H1 (cell line): ENCODE measurements at regions of chr20 and their contacts with region 1.

Region 1: DNA sequence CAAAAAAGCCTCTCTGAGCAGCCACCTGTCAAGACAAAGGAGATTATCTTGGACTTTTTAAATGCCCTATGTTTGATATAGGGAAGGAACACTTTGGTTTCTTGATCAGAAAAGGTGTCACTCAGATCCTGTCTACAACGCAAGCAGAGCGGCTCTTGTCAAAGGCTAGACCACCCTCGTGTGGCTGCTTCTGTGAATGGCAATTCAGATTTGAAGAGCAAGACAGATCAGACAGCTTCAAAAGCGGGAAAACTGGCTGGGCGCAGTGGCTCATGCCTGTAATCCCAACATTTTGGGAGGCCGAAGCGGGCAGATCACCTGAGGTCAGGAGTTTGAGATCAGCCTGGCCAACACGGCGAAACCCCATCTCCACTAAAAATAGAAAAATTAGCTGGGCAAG is 10.1 kb upstream of the NXT1 start:
- DNase-seq: peak in 1 of 2 experiments; percentile 70
- H3K4me3 ChIP-seq: no peak overlapping the region
- H3K27ac ChIP-seq: no peak overlapping the region
- H3K4me1 ChIP-seq: peaks cover 0 to 5% (median 0%) of the 10 kb centered on the region in 4 experiments; a peak in 3 of 7 replicates
- H3K27me3 ChIP-seq: no peaks in the 10 kb centered on the region
- CTCF ChIP-seq: peak; percentile 51 to 87 (median 83)
- EP300 ChIP-seq: no peak
- POLR2A ChIP-seq: no peak
- RAD21 ChIP-seq: peak; percentile 94

Region 2: GRCh38 chr20:22684072-22684762 is 656.3 kb before region 1 on chr20:
- CTCF ChIA-PET with region 1: interaction called, 48 read pairs
- POLR2A ChIA-PET with region 1: no interaction called
- DNase-seq: peak; percentile 47 to 83
- H3K4me3 ChIP-seq: no peak overlapping the region
- H3K27ac ChIP-seq: no peak overlapping the region
- H3K4me1 ChIP-seq: no peaks in the 10 kb centered on the region
- H3K27me3 ChIP-seq: no peaks in the 10 kb centered on the region; a peak in 3 of 7 replicates
- CTCF ChIP-seq: peak; percentile 69 to 93 (median 91)
- EP300 ChIP-seq: no peak
- POLR2A ChIP-seq: no peak
- RAD21 ChIP-seq: peak; percentile 99

Region 3: GRCh38 chr20:23050847-23051631 is 289.5 kb before region 1 on chr20:
- CTCF ChIA-PET with region 1: interaction called, 30 read pairs
- POLR2A ChIA-PET with region 1: interaction called, 7 read pairs
- DNase-seq: peak; percentile 78 to 98
- H3K4me3 ChIP-seq: peak overlapping the region; percentile 47 to 71 (median 61)
- H3K27ac ChIP-seq: no peak overlapping the region
- H3K4me1 ChIP-seq: peaks cover 4 to 12% (median 6%) of the 10 kb centered on the region in 4 experiments; a peak in 6 of 7 replicates
- H3K27me3 ChIP-seq: peaks cover 31 to 61% (median 50%) of the 10 kb centered on the region in 4 experiments
- CTCF ChIP-seq: peak; percentile 68 to 90 (median 85)
- EP300 ChIP-seq: no peak
- POLR2A ChIP-seq: no peak
- RAD21 ChIP-seq: peak; percentile 81 to 86

Region 4: DNA sequence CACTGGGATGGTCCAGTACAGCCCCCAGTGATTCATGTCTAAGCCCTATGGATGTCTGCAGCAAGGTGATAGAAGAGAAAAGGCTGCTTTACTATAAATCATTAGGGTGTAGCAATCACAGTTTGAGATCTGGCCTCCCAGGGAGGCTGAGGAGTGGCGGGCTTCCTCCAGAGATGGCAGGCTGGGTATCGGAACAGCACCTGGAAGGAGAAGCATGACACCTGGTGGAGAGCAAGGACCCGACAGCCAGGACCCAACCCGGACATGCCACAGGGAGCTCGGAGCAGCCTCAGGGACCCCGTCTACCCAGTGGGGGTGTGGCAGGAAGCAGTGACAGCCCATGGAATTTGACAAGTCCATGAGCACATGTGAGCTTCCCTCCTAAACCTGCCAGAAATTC is 139.6 kb before region 1 on chr20:
- CTCF ChIA-PET with region 1: interaction called, 11 read pairs
- POLR2A ChIA-PET with region 1: no interaction called
- DNase-seq: peak; percentile 34 to 70
- H3K4me3 ChIP-seq: no peak overlapping the region
- H3K27ac ChIP-seq: no peak overlapping the region
- H3K4me1 ChIP-seq: peaks cover 9 to 14% (median 10%) of the 10 kb centered on the region in 4 experiments
- H3K27me3 ChIP-seq: peaks cover 0 to 2% (median 0%) of the 10 kb centered on the region in 4 experiments; a peak in 2 of 7 replicates
- CTCF ChIP-seq: peak; percentile 79 to 84 (median 84)
- EP300 ChIP-seq: peak in 1 of 2 experiments; percentile 28; a peak in 1 of 3 replicates
- POLR2A ChIP-seq: no peak
- RAD21 ChIP-seq: peak; percentile 90 to 93

Region 5: GRCh38 chr20:23245553-23246181 is 94.9 kb before region 1 on chr20:
- CTCF ChIA-PET with region 1: interaction called, 41 read pairs
- POLR2A ChIA-PET with region 1: no interaction called
- DNase-seq: peak in 1 of 2 experiments; percentile 66
- H3K4me3 ChIP-seq: no peak overlapping the region
- H3K27ac ChIP-seq: no peak overlapping the region
- H3K4me1 ChIP-seq: no peaks in the 10 kb centered on the region
- H3K27me3 ChIP-seq: no peaks in the 10 kb centered on the region
- CTCF ChIP-seq: peak; percentile 59 to 86 (median 83)
- EP300 ChIP-seq: no peak
- POLR2A ChIP-seq: no peak
- RAD21 ChIP-seq: peak; percentile 47 to 62

Region 6: GRCh38 chr20:23282111-23282510 is 58.4 kb before region 1 on chr20:
- CTCF ChIA-PET with region 1: no interaction called
- POLR2A ChIA-PET with region 1: no interaction called
- DNase-seq: no peak
- H3K4me3 ChIP-seq: no peak overlapping the region
- H3K27ac ChIP-seq: no peak overlapping the region
- H3K4me1 ChIP-seq: no peaks in the 10 kb centered on the region
- H3K27me3 ChIP-seq: no peaks in the 10 kb centered on the region
- CTCF ChIP-seq: no peak
- EP300 ChIP-seq: no peak
- POLR2A ChIP-seq: no peak
- RAD21 ChIP-seq: no peak

Region 7: DNA sequence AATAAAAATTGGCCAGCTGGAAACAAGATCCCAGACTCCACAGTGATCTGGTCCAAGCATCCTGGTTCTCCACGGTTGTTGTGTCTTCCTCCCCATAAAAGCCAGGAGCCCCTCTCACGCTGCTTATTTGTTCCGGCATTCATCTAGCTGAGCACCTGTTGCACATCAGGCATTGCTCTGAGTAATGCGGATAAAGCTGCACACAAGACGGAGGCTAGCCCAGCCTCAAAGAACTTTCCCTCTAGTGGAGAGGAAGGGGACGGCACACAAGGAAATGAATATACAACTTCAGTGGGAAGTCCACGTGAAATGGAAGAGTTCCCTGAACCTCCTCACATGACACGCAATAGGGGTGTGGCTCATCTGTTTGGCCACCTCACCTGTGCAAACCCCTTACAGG is 20.2 kb before region 1 on chr20:
- CTCF ChIA-PET with region 1: interaction called, 63 read pairs
- POLR2A ChIA-PET with region 1: interaction called, 3 read pairs
- DNase-seq: no peak
- H3K4me3 ChIP-seq: no peak overlapping the region
- H3K27ac ChIP-seq: no peak overlapping the region
- H3K4me1 ChIP-seq: peaks cover 0 to 6% (median under 1%) of the 10 kb centered on the region in 4 experiments; a peak in 1 of 7 replicates
- H3K27me3 ChIP-seq: no peaks in the 10 kb centered on the region
- CTCF ChIP-seq: peak in 1 of 3 experiments; percentile 55; a peak in 2 of 4 replicates
- EP300 ChIP-seq: no peak
- POLR2A ChIP-seq: no peak
- RAD21 ChIP-seq: peak in 1 of 2 experiments; percentile 25; a peak in 1 of 4 replicates

Region 8: DNA sequence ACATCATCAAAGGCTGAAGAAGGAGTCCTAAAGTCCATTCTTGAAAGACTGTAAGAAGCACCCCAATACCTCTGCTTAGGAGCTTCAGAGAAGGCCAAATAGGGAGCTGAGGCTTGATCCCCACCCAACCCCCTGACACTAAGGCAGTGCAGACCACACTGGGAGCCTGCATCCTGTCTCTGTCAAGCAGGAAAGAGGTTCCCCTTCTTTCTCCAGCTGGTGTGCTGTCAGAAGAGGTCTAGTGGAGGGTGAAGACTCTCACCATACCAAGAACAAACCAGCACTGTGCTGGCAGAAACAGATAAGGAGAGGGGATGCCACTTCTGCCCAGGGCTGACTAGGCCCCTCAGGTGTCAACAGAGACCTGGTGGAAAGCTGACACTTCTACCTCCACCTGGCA is 41.4 kb after region 1 on chr20:
- CTCF ChIA-PET with region 1: no interaction called
- POLR2A ChIA-PET with region 1: no interaction called
- DNase-seq: no peak
- H3K4me3 ChIP-seq: no peak overlapping the region
- H3K27ac ChIP-seq: no peak overlapping the region
- H3K4me1 ChIP-seq: no peaks in the 10 kb centered on the region
- H3K27me3 ChIP-seq: no peaks in the 10 kb centered on the region; a peak in 1 of 7 replicates
- CTCF ChIP-seq: no peak
- EP300 ChIP-seq: no peak
- POLR2A ChIP-seq: no peak
- RAD21 ChIP-seq: no peak

Region 9: DNA sequence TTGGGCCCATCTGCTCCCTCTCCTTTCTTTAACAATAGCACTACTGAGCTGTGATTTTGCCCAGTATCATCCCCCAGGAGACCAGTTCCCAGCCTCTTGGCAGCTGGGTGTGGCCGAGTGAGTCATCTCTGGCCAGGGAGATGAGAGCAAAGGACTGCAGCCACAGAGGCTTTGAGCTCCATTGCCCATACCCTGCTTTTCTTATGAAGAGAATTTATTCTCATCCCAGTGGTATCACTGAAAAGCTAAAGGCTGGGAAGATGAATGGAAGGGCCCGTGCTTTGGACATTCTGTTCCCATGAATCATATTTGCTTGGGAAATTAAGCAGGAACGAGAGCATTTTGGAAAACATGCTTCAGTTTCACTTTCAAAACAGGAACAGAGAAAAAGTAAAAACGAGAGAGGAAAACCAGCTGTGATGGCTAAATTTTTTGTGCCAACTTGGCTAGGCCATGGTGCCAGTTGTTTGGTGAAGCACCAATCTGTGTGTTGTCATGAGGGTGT is 282.4 kb after region 1 on chr20:
- CTCF ChIA-PET with region 1: no interaction called
- POLR2A ChIA-PET with region 1: no interaction called
- DNase-seq: no peak
- H3K4me3 ChIP-seq: no peak overlapping the region
- H3K27ac ChIP-seq: no peak overlapping the region
- H3K4me1 ChIP-seq: peaks cover 0 to 4% (median 2%) of the 10 kb centered on the region in 4 experiments; a peak in 3 of 7 replicates
- H3K27me3 ChIP-seq: no peaks in the 10 kb centered on the region
- CTCF ChIP-seq: no peak
- EP300 ChIP-seq: no peak
- POLR2A ChIP-seq: no peak
- RAD21 ChIP-seq: no peak